Transverse colon (tissue), 4 donors: ENCODE measurements at regions of chr20 and their contacts with region 1.

Region 1: DNA sequence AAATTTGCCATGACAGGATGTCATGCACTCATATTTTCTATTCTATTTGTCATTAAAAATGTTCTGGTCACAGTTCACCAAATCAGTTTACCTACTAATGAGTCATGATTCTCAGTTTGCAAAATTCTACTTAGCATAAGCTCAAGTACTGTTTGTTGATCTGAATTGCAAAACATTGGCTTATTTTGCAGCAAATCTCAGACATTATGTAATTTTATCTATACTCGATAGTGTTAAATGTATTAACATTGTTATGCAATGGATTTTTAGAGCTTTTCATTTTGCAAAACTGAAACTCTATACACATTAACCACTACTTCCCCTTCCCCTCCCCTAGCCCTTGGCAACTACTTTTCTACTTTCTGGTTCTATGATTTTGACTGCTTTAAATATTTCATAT is 213.8 kb upstream of the ZFP64 start:
- DNase-seq: no peak
- H3K4me3 ChIP-seq: no peak overlapping the region
- H3K27ac ChIP-seq: no peak overlapping the region
- H3K4me1 ChIP-seq: no peaks in the 10 kb centered on the region
- H3K27me3 ChIP-seq: peaks cover 3% of the 10 kb centered on the region
- CTCF ChIP-seq: no peak
- EP300 ChIP-seq: no peak
- POLR2A ChIP-seq: no peak

Region 2: GRCh38 chr20:52340036-52340648 is 65.3 kb before region 1 on chr20:
- in situ Hi-C with region 1: loop called in 1 of 4 experiments (anchors 10 kb)
- intact Hi-C with region 1: no loop called
- DNase-seq: no peak
- H3K4me3 ChIP-seq: no peak overlapping the region
- H3K27ac ChIP-seq: no peak overlapping the region
- H3K4me1 ChIP-seq: no peaks in the 10 kb centered on the region
- H3K27me3 ChIP-seq: no peaks in the 10 kb centered on the region
- CTCF ChIP-seq: no peak
- EP300 ChIP-seq: no peak
- POLR2A ChIP-seq: no peak